PC-9 (cell line): ENCODE measurements at regions of chr16 and their contacts with region 1.

Region 1: GRCh38 chr16:27822529-27822928 is 241.0 kb downstream of the GSG1L start:
- DNase-seq: no peak
- H3K4me3 ChIP-seq: no peak overlapping the region
- H3K27ac ChIP-seq: no peak overlapping the region
- H3K4me1 ChIP-seq: no peaks in the 10 kb centered on the region
- H3K27me3 ChIP-seq: peaks cover 87% of the 10 kb centered on the region
- CTCF ChIP-seq: no peak

Region 2: GRCh38 chr16:27803775-27804549 is 18.6 kb before region 1 on chr16:
- CTCF ChIA-PET with region 1: no interaction called
- POLR2A ChIA-PET with region 1: interaction called, 11 read pairs
- intact Hi-C with region 1: no loop called
- DNase-seq: no peak
- H3K4me3 ChIP-seq: no peak overlapping the region
- H3K27ac ChIP-seq: no peak overlapping the region
- H3K4me1 ChIP-seq: no peaks in the 10 kb centered on the region
- H3K27me3 ChIP-seq: peaks cover 86% of the 10 kb centered on the region
- CTCF ChIP-seq: no peak

Region 3: DNA sequence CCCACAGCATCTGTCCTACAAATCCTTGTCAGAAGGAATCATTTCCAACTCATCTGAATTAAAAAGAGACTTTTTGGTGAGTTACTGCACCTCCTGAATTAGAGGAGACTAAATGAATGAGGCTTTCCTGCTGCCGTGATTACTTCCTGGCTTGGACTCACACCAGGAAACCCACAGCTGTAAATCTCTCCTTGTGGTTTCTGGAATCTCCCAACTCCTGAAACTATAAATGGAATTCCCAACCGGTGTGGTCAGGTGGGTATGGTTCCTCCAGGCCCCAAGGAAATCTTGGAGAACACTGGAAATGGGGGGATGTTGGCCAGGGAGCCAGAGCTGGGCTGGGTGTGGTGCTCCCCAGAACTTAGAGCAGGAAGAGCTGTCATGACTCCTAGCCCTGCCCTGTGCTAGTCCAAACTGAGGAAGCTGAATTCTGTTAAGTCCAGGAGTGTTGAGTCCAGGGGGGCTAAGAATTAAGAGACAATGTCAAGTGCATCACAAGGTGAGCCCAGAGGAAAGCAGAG is 24.6 kb after region 1 on chr16:
- CTCF ChIA-PET with region 1: no interaction called
- POLR2A ChIA-PET with region 1: no interaction called
- intact Hi-C with region 1: no loop called
- DNase-seq: no peak
- H3K4me3 ChIP-seq: no peak overlapping the region
- H3K27ac ChIP-seq: no peak overlapping the region
- H3K4me1 ChIP-seq: no peaks in the 10 kb centered on the region
- H3K27me3 ChIP-seq: peaks cover 38% of the 10 kb centered on the region
- CTCF ChIP-seq: no peak